ENCODE measurements at regions of chr6 and their contacts with region 1.

Region 1: GRCh38 chr6:73451223-73452107 is 632 bp downstream of the CGAS start:
- DNase-seq: peak; percentile 29 to 58
- ATAC-seq: peak; percentile 83 to 89
- H3K4me3 ChIP-seq: peak overlapping the region; percentile 60
- H3K27ac ChIP-seq: peak overlapping the region; percentile 86 to 97
- H3K4me1 ChIP-seq: no peaks in the 10 kb centered on the region
- CTCF ChIP-seq: no peak
- EP300 ChIP-seq: no peak
- POLR2A ChIP-seq: no peak
- RAD21 ChIP-seq: no peak

Region 2: GRCh38 chr6:73461537-73462350 is 10.3 kb after region 1 on chr6 and contains the start of gene MTO1:
- CTCF ChIA-PET with region 1: interaction called, 10 read pairs
- POLR2A ChIA-PET with region 1: interaction called, 11 read pairs
- DNase-seq: peak; percentile 86 to 88
- ATAC-seq: peak; percentile 99
- H3K4me3 ChIP-seq: peak within 1 kb of the TSS; percentile 65
- H3K27ac ChIP-seq: peak within 1 kb of the TSS; percentile 87 to 89
- H3K4me1 ChIP-seq: no peaks in the 10 kb centered on the region
- CTCF ChIP-seq: no peak
- EP300 ChIP-seq: no peak
- POLR2A ChIP-seq: peak; percentile 50
- RAD21 ChIP-seq: no peak
- polyA plus RNA-seq, gene MTO1: 19.9 and 22.1 TPM in 2 replicates

Region 3: DNA sequence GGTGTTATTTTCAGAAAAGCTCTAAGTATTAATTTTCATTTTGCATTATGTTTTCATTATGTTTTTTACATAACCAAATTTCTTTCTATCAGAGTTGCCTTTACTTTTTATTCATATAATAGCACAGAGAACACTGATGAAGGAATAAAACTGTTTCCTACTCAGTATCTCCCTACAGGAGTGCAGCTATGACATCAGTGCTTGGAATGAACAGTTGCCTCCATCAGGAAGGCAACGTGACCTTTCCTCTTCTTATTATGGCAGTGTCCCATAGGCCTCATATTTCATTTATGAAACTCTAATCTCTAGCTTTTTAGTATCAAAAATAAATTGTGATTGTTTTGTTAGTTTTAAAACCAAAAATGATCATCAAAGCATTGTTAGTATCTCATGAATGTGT is 957.4 kb after region 1 on chr6:
- CTCF ChIA-PET with region 1: no interaction called
- POLR2A ChIA-PET with region 1: no interaction called
- DNase-seq: no peak
- ATAC-seq: no peak
- H3K4me3 ChIP-seq: no peak overlapping the region
- H3K27ac ChIP-seq: no peak overlapping the region
- H3K4me1 ChIP-seq: no peaks in the 10 kb centered on the region
- CTCF ChIP-seq: no peak
- EP300 ChIP-seq: no peak
- POLR2A ChIP-seq: no peak
- RAD21 ChIP-seq: no peak